SK-N-SH (cell line): ENCODE measurements at regions of chr14 and their contacts with region 1.

Region 1: GRCh38 chr14:67426983-67427606 is 15.1 kb upstream of the PLEK2 start:
- DNase-seq: peak; percentile 85
- H3K4me3 ChIP-seq: peak overlapping the region in 1 of 2 experiments; percentile 44; a peak in 1 of 4 replicates
- H3K27ac ChIP-seq: no peak overlapping the region
- H3K4me1 ChIP-seq: no peaks in the 10 kb centered on the region
- H3K27me3 ChIP-seq: no peaks in the 10 kb centered on the region; the same call in 1 of the 2 replicates
- CTCF ChIP-seq: peak; percentile 83
- EP300 ChIP-seq: no peak
- RAD21 ChIP-seq: peak; percentile 95

Region 2: DNA sequence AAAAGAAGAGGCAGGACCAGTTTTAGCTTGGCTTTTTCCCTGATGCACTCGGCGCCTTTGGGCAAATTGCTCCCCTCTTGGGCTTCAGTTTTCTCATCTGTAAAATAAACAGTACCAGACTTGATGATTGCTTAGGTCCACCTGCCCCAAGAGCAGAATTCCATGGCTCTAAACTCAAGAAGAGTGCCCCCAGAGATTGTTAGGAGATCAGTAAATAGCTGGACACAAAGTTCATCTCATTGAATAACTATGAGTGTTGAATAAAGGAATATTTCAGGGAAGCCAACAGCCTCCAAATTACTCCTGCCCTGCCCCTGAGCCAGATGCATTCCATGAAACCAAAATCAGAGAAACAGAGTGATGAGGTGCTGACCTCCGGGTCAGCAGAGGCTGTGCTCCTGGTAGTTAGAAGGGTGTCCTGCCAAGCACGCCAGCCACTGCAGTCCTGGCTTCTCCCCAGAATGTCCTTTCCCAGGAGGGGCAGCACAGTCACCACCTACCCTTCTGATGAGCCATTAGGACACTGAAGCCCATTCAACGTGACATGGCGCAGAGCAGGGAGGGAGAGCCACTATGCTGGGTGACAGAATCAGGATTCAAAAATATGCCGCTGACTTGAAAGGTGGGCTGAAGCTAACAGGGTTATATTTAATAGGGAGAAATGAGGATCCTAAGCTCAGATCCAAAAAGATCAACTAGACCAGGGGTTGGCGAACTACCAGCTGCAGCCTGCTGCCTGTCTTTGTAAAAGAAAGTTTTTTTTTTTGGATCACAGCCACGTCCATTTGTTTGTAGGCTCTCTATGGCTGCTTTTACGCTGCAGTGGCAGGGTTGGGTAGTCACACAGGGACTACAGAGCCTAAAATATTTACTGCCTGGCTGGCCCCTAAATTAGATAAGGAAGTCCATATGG is 19.3 kb after region 1 on chr14:
- CTCF ChIA-PET with region 1: interaction called, 37 read pairs
- POLR2A ChIA-PET with region 1: no interaction called
- DNase-seq: no peak
- H3K4me3 ChIP-seq: no peak overlapping the region
- H3K27ac ChIP-seq: no peak overlapping the region
- H3K4me1 ChIP-seq: peaks cover 3 to 6% of the 10 kb centered on the region in 2 experiments; a peak in 2 of 4 replicates
- H3K27me3 ChIP-seq: no peaks in the 10 kb centered on the region
- CTCF ChIP-seq: no peak
- EP300 ChIP-seq: no peak
- RAD21 ChIP-seq: no peak

Region 3: DNA sequence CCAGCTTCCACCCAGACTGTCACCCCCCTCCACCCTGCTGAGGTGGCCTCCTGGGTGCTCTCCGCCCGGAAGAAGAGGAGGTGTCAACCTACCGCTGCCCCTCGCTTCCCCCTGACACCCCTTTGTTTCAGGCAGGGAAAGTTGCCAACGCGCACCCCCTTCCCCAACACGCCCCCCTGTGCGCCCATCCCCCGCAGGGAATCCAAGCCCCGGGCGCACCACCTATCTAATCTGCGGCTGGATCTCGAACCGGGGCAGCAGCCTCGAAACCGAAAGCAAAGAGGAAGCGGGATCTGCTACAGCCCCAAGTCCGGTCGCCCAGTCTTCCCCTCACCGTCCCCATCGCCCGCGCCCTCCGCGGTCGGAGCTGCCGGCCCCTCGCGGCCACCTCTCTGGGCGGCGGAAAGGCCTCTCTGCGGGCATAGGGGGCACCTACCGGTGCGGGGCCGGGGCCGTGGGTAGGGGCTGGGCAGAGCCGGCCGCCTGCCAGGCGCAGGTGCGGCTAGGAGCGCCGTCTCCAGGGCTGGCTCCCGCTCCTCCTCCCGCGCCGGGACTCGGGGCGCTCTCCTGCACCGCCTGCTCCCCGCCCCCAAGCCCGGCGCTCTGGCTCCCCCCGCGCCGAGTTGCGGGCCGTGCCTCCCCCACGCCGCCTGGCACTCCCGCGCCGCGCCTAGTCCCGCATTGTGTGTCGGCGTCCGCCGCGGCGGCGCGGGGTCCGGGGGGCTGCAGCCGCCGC is 87.7 kb after region 1 on chr14:
- CTCF ChIA-PET with region 1: interaction called, 24 read pairs
- POLR2A ChIA-PET with region 1: no interaction called
- DNase-seq: peak; percentile 83
- H3K4me3 ChIP-seq: peak overlapping the region; percentile 74 to 78
- H3K27ac ChIP-seq: no peak overlapping the region
- H3K4me1 ChIP-seq: peaks cover 0 to 18% of the 10 kb centered on the region in 2 experiments; a peak in 2 of 4 replicates
- H3K27me3 ChIP-seq: peaks cover 21% of the 10 kb centered on the region; the same call in 1 of the 2 replicates
- CTCF ChIP-seq: no peak
- EP300 ChIP-seq: no peak
- RAD21 ChIP-seq: no peak

Region 4: GRCh38 chr14:67557126-67557525 is 130.0 kb after region 1 on chr14:
- CTCF ChIA-PET with region 1: interaction called, 319 read pairs
- POLR2A ChIA-PET with region 1: no interaction called
- DNase-seq: no peak
- H3K4me3 ChIP-seq: no peak overlapping the region
- H3K27ac ChIP-seq: no peak overlapping the region
- H3K4me1 ChIP-seq: no peaks in the 10 kb centered on the region
- H3K27me3 ChIP-seq: no peaks in the 10 kb centered on the region
- CTCF ChIP-seq: no peak
- EP300 ChIP-seq: no peak
- RAD21 ChIP-seq: no peak

Region 5: DNA sequence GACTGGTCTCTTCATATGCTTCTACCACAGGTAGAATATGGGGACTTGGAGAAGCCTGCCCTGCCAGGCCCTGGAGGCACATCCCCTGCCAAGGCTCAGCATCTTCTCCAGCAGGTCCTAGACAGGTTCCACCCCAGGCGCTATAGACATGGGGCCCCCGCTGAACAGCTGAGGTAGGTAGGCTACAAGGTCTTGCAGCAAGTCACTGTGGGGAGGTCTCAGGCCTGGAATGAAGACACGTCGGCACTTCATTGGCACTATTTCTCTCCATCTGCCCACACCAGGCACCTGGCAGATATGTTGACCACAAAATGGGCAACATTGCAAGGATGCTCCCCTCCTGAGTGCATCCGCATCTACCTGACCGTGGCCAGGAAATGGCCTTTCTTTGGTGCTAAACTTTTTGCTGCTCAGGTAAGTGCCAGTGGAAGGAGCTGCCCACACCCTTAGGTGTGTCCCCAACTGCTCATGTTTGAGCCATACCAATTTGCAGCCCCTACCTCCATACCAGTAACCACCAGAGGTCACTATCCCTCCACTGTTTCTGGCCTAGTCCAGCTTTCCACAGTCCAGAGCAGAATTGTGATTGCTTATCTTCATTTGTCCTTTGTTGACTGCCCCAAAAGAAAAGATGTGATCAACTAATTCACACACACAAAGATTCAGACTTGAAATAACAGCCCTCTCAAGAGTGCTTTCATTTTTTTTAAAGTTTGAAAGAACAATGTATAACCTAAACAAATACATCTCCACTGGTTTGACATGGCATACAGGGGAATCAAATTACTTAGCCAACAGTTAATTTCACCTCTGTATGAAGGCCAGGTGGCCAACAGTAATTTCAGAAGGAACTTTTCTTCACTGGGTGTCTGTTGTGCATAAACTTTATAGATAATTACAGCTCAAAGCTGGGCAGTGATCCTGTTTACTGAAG is 156.9 kb after region 1 on chr14:
- CTCF ChIA-PET with region 1: interaction called, 61 read pairs
- POLR2A ChIA-PET with region 1: no interaction called
- DNase-seq: peak; percentile 80
- H3K4me3 ChIP-seq: no peak overlapping the region; a peak in 1 of 4 replicates
- H3K27ac ChIP-seq: no peak overlapping the region
- H3K4me1 ChIP-seq: no peaks in the 10 kb centered on the region
- H3K27me3 ChIP-seq: no peaks in the 10 kb centered on the region
- CTCF ChIP-seq: peak; percentile 74
- EP300 ChIP-seq: no peak
- RAD21 ChIP-seq: peak; percentile 85

Region 6: GRCh38 chr14:67599698-67600561 is 172.8 kb after region 1 on chr14 and contains the start of gene PIGH:
- CTCF ChIA-PET with region 1: interaction called, 23 read pairs
- POLR2A ChIA-PET with region 1: no interaction called
- DNase-seq: peak; percentile 97
- H3K4me3 ChIP-seq: peak within 1 kb of the TSS; percentile 77 to 90
- H3K27ac ChIP-seq: peak within 1 kb of the TSS; percentile 65 to 66
- H3K4me1 ChIP-seq: peaks cover 0 to 6% of the 10 kb centered on the region in 2 experiments; a peak in 2 of 4 replicates
- H3K27me3 ChIP-seq: no peaks in the 10 kb centered on the region
- CTCF ChIP-seq: peak; percentile 58
- EP300 ChIP-seq: no peak
- RAD21 ChIP-seq: no peak; the same call in 1 of the 2 replicates
- polyA plus RNA-seq, gene PIGH: 23.6 and 26.5 TPM in 2 replicates